Activated CD8-positive, alpha-beta T cell treated with anti-CD3 and anti-CD28 coated beads, Interleukin-2, amount 10 ng/mL, durations not matched to agents 7 days and 5 days (primary cell): ENCODE measurements at regions of chr7 and their contacts with region 1.

Region 1: GRCh38 chr7:25125137-25125946 is at the start of gene CYCS:
- DNase-seq: peak; percentile 100
- ATAC-seq: peak; percentile 95
- H3K4me3 Mint-ChIP-seq: peak within 1 kb of the TSS; percentile 86
- H3K27ac Mint-ChIP-seq: peak within 1 kb of the TSS; percentile 95
- H3K4me1 Mint-ChIP-seq: peaks cover 38% of the 10 kb centered on the region
- H3K27me3 Mint-ChIP-seq: no peaks in the 10 kb centered on the region
- total RNA-seq, gene CYCS: 153 to 157 TPM

Region 2: DNA sequence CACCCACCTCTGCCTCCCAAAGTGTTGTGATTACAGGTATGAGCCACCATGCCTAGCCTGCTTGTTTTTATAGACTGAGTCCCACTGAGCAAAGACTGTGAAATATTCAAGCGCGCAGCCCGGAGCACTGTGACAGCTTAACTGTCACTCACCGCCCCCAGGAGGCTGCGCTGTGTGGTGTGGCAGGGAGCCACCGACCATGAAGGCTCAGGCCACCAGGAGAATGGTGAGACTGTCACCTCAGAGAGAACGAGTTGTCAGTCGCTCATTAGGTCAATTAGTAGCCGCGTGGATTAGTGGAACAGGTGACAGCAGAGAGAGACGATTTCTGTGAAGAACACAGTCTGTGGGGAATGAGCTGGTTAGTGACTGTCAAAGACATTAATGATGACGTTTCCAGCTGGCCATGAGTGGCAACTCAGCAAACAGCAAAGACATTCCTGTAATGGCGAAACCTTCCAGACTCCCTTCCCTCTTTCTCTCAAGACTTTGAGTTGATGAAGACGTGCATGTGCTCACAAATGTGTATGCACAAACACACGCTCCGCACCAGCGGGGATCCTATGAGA is 64.8 kb before region 1 on chr7:
- CTCF ChIA-PET with region 1: no interaction called
- POLR2A ChIA-PET with region 1: no interaction called
- DNase-seq: no peak
- ATAC-seq: no peak
- H3K4me3 Mint-ChIP-seq: no peak overlapping the region
- H3K27ac Mint-ChIP-seq: no peak overlapping the region
- H3K4me1 Mint-ChIP-seq: no peaks in the 10 kb centered on the region
- H3K27me3 Mint-ChIP-seq: peaks cover 8% of the 10 kb centered on the region

Region 3: DNA sequence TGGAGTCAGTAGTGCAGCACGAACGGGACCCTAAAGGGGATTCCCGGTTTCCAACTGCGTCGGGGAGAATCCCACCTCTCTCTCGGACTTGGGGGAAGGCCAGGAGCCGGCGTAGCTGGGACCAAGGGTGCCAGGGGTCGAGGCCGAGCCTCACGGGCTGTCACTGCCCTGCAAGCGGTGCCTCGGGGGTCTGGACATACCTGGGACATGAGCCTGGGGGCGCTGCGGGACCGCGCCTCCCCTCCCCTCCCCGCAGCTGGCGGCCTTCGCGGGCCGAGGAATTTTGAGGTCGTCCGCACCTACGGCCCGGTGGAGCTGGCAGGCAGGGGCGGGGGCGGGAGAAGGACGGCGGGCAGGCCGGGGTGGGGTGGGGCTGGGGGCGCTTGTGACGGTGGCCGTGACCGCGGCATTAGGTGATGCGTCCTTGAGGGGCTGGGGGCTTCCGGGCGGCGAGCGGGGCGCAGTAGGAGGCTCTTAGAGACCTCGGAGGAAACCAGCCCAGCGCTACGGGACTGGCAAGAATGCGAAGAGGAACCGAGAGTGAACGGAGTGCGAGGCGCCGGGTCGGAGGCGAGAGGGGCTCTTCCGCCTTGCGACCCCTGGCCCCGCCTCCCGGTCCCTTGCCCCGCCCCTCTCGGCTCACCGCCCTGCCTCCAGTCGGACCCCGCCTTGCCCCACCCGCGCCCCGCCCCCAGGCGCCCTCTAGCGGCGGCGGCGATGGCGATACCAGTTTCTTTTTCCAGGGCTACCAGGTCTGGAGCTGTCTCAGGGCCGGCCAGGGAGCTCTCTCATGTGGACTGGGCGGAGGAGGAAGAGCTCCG is 54.6 kb after region 1 on chr7:
- CTCF ChIA-PET with region 1: interaction called, 18 read pairs
- POLR2A ChIA-PET with region 1: interaction called, 7 read pairs
- DNase-seq: peak; percentile 95
- ATAC-seq: peak; percentile 97
- H3K4me3 Mint-ChIP-seq: peak overlapping the region; percentile 84
- H3K27ac Mint-ChIP-seq: peak overlapping the region; percentile 95
- H3K4me1 Mint-ChIP-seq: peaks cover 17% of the 10 kb centered on the region
- H3K27me3 Mint-ChIP-seq: peaks cover 13% of the 10 kb centered on the region